Sciatic nerve (tissue), 2 donors: ENCODE measurements at regions of chr2 and their contacts with region 1.

Region 1: DNA sequence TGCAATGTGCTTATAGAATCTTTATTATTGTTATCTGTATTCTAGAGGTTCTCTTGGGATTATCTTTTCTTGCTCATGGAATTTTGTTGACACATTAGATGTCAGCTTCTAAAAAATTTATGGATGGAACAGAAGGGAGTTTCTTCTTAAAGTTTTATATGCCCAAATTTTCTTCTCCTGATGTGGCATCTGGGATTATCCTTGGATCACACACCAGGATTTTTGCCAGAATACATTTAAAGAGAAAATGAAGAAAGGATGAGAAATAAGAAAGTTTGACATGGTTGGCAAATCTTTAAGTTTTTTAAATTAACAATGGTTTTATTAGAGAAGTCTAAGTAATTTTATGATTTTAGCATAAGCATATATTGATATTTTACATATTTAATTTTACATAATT is 706.7 kb upstream of the TMEFF2 start:
- DNase-seq: no peak
- ATAC-seq: no peak

Region 2: GRCh38 chr2:191478799-191479679 is 1422.4 kb before region 1 on chr2:
- intact Hi-C with region 1: loop called (anchors 5 kb)
- DNase-seq: peak; percentile 69
- ATAC-seq: peak; percentile 98

Region 3: DNA sequence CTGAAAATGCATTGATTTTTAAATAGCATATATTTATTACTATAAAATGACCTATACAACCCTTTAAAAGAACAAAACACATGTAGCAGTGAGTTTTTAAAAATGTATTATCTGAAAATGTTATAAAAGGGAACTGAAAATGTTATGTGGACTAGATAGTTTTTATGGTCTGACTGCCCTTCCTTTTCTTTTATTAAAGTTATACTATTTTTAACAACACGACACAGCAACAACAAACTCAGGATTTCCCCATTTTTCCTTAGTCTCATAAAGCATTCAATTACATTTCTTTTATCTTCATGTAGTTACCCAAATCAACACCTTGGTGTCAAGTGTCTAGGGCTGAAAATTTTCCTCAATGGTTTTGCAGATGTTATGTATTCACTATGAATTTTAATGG is 573.9 kb before region 1 on chr2:
- intact Hi-C with region 1: no loop called
- DNase-seq: no peak
- ATAC-seq: no peak